PC-3 (cell line): ENCODE measurements at regions of chr3 and their contacts with region 1.

Region 1: GRCh38 chr3:22244761-22245521 is 493.9 kb upstream of the ZNF385D start:
- DNase-seq: peak; percentile 93
- ATAC-seq: peak; percentile 96
- H3K4me3 ChIP-seq: no peak overlapping the region
- H3K27ac ChIP-seq: no peak overlapping the region
- H3K4me1 ChIP-seq: peaks cover 18% of the 10 kb centered on the region
- H3K27me3 ChIP-seq: no peaks in the 10 kb centered on the region
- CTCF ChIP-seq: no peak

Region 2: DNA sequence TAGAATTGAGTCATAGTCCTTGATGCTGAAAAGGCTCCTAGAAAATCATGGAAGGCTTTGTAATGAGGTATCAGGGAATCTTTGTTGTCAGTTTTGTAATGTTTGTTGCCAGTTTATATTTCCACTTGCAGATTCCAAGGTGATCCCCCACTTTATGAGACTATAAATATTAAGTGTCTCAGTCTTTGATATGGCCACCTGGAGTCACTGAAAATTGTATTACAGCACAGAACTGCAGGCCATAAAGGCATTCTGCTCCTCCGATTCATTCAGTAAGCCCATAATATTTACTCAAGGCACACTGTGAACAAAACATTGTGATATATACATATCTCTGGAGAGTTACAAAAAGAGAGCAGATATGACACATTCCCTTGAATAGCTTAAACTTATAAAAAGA is 36.1 kb before region 1 on chr3:
- CTCF ChIA-PET with region 1: no interaction called
- POLR2A ChIA-PET with region 1: interaction called, 15 read pairs
- intact Hi-C with region 1: no loop called
- DNase-seq: no peak
- ATAC-seq: peak; percentile 57
- H3K4me3 ChIP-seq: no peak overlapping the region
- H3K27ac ChIP-seq: no peak overlapping the region
- H3K4me1 ChIP-seq: no peaks in the 10 kb centered on the region
- H3K27me3 ChIP-seq: no peaks in the 10 kb centered on the region
- CTCF ChIP-seq: no peak

Region 3: GRCh38 chr3:22632536-22632935 is 387.6 kb after region 1 on chr3:
- CTCF ChIA-PET with region 1: no interaction called
- POLR2A ChIA-PET with region 1: no interaction called
- intact Hi-C with region 1: no loop called
- DNase-seq: no peak
- ATAC-seq: no peak
- H3K4me3 ChIP-seq: no peak overlapping the region
- H3K27ac ChIP-seq: no peak overlapping the region
- H3K4me1 ChIP-seq: no peaks in the 10 kb centered on the region
- H3K27me3 ChIP-seq: no peaks in the 10 kb centered on the region
- CTCF ChIP-seq: no peak

Region 4: DNA sequence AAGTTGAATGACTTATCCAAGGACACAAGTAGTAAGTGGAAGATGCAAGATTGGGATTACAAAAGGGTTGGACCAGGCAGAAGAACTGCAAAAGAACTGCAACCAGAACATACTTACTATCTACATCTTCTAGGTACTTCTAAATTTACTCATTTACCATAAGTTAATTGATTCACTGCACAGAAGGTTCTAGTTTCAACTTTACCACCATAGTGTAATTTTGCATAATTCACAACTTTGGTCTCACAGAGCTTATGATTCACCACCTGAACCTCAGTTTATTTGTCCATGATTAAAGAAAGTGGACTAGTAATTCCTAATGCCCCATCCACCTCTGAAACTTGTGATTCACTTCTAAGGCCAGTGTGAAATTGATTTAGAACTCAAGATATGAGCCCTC is 721.4 kb after region 1 on chr3:
- CTCF ChIA-PET with region 1: no interaction called
- POLR2A ChIA-PET with region 1: interaction called, 16 read pairs
- intact Hi-C with region 1: no loop called
- DNase-seq: no peak
- ATAC-seq: no peak
- H3K4me3 ChIP-seq: no peak overlapping the region
- H3K27ac ChIP-seq: no peak overlapping the region
- H3K4me1 ChIP-seq: no peaks in the 10 kb centered on the region
- H3K27me3 ChIP-seq: no peaks in the 10 kb centered on the region
- CTCF ChIP-seq: no peak